Left cardiac atrium (tissue), 4 donors: ENCODE measurements at regions of chr13 and their contacts with region 1.

Region 1: GRCh38 chr13:113452942-113453901 is at the start of gene ADPRHL1:
- DNase-seq: peak; percentile 67
- ATAC-seq: peak; percentile 69 to 72
- total RNA-seq, gene ADPRHL1: 241 to 245 TPM

Region 2: GRCh38 chr13:113400621-113401451 is 52.4 kb before region 1 on chr13:
- intact Hi-C with region 1: loop called in 1 of 2 experiments (anchors 5 kb)
- DNase-seq: peak; percentile 67
- ATAC-seq: peak; percentile 75 to 79

Region 3: DNA sequence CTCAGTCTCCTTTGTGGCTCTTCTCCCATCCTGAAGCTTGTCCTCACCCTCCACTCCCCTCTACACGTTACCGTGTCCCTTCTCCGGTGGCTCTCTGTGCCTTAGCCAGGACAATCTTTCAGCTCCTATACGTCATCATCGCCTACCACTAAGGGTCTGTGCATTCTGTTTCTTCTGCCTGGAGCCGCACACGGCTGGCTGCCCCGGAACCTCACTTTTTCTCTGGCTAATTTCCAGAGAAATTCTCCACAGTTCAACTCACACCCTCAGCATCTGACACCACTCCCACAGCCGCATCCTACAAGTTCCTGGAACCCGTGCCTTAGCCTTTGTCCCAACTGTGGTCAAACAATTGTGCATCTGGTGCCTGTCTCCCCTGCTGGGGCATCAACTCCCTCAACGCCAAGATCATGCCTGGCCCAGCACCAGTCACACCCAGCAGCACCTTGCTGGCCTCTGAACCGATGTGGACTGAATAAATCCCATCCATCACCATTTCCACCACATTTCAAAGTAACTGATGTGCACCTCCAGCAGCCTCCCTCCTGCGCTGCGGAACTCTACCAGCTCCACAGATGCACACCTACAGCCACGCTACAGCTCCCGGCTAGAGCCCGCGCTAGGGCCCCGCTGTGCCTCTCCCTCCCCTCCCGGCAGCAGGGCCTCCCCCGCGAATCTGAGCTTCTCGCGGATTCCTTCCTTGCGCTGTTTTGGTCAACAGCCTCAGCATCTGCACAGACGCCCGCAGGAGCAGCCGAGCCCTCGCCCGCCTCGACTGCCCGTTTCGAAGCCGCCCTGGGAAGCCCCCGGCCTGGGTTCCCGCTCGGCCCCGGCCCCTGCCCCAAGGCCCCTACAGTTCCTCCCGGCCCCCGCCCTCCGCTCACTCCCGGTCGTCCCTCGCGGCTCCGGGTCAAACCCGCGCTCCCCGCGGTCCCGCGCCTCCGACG is 36.6 kb after region 1 on chr13:
- intact Hi-C with region 1: loop called (anchors 5 kb)
- DNase-seq: peak; percentile 52
- ATAC-seq: peak; percentile 3 to 7

Region 4: GRCh38 chr13:113664751-113665596 is 211.8 kb after region 1 on chr13:
- intact Hi-C with region 1: no loop called
- DNase-seq: no peak
- ATAC-seq: no peak